Sigmoid colon (tissue), 7 donors: ENCODE measurements at regions of chr4 and their contacts with region 1.

Region 1: DNA sequence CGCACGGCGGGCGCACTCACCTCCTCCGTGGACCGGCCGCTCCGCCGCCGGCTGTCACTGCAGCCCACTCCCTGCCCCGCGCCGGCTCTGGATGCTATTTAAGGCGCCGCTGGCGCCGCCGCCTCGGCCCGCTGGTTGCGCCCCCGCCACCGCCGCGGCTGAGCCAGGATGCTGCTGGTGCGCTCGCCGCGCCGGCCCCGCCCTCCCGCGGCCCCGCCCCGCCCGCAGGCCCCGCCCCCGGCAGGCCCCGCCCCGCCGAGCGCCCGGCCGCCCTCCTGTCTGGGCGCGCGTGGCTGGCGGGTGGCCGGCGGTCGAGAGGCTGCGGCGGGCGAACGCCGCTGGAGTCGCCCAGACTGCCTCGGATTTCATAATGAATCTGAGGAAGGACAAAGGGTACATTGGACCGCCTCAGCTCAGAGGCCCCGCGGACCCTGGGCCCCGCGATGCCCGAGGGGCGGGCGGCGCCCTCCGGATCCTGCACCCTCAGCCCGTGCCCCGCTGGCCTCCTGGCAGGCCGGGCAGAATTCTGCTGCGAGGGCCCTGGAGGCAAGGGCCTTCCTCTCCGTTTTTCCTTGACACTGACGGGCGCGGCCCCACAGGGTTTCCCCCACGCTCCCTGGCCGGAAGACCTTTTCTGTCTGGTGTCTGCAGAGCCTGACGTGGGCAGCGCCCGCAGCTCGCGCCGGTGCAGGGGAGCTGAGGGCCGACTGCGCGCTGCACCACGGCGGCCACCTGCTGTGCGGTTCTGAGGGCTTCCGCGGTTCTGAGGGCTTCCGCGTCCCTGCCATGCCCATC is at the start of gene ACSL1:
- DNase-seq: peak; percentile 90
- H3K4me3 ChIP-seq: peak within 1 kb of the TSS; percentile 46 to 88 (median 65)
- H3K27ac ChIP-seq: peak within 1 kb of the TSS; percentile 80 to 91 (median 84)
- H3K4me1 ChIP-seq: peaks cover 0 to 22% (median 10%) of the 10 kb centered on the region in 4 donors
- H3K27me3 ChIP-seq: no peaks in the 10 kb centered on the region
- CTCF ChIP-seq: no peak
- EP300 ChIP-seq: no peak
- POLR2A ChIP-seq: no peak
- total RNA-seq, gene ACSL1: 37.8 to 118 (median 72.3) TPM

Region 2: GRCh38 chr4:184733654-184734524 is 92.2 kb before region 1 on chr4 and contains the start of gene CENPU:
- intact Hi-C with region 1: loop called (anchors 2 kb)
- DNase-seq: peak; percentile 97
- H3K4me3 ChIP-seq: peak within 1 kb of the TSS; percentile 32 to 74 (median 58)
- H3K27ac ChIP-seq: peak within 1 kb of the TSS; percentile 63 to 72 (median 68)
- H3K4me1 ChIP-seq: peaks cover 3 to 17% (median 11%) of the 10 kb centered on the region in 4 donors
- H3K27me3 ChIP-seq: no peaks in the 10 kb centered on the region
- CTCF ChIP-seq: no peak
- EP300 ChIP-seq: peak in 1 of 4 donors; percentile 62
- POLR2A ChIP-seq: no peak
- total RNA-seq, gene CENPU: 0.95 to 1.4 (median 1.3) TPM in 3 of 4 donors, not detected in the other